ENCODE measurements at regions of chr3 and their contacts with region 1.

Region 1: GRCh38 chr3:141963301-141963700 is 86.9 kb downstream of the ATP1B3 start:
- DNase-seq: no peak
- ATAC-seq: no peak
- H3K4me3 Mint-ChIP-seq: no peak overlapping the region
- H3K27ac Mint-ChIP-seq: no peak overlapping the region
- H3K4me1 Mint-ChIP-seq: peaks cover 2% of the 10 kb centered on the region
- H3K27me3 Mint-ChIP-seq: no peaks in the 10 kb centered on the region

Region 2: GRCh38 chr3:141816958-141817357 is 146.3 kb before region 1 on chr3:
- CTCF ChIA-PET with region 1: no interaction called
- POLR2A ChIA-PET with region 1: no interaction called
- DNase-seq: no peak
- ATAC-seq: no peak
- H3K4me3 Mint-ChIP-seq: no peak overlapping the region
- H3K27ac Mint-ChIP-seq: no peak overlapping the region
- H3K4me1 Mint-ChIP-seq: no peaks in the 10 kb centered on the region
- H3K27me3 Mint-ChIP-seq: peaks cover 26% of the 10 kb centered on the region

Region 3: DNA sequence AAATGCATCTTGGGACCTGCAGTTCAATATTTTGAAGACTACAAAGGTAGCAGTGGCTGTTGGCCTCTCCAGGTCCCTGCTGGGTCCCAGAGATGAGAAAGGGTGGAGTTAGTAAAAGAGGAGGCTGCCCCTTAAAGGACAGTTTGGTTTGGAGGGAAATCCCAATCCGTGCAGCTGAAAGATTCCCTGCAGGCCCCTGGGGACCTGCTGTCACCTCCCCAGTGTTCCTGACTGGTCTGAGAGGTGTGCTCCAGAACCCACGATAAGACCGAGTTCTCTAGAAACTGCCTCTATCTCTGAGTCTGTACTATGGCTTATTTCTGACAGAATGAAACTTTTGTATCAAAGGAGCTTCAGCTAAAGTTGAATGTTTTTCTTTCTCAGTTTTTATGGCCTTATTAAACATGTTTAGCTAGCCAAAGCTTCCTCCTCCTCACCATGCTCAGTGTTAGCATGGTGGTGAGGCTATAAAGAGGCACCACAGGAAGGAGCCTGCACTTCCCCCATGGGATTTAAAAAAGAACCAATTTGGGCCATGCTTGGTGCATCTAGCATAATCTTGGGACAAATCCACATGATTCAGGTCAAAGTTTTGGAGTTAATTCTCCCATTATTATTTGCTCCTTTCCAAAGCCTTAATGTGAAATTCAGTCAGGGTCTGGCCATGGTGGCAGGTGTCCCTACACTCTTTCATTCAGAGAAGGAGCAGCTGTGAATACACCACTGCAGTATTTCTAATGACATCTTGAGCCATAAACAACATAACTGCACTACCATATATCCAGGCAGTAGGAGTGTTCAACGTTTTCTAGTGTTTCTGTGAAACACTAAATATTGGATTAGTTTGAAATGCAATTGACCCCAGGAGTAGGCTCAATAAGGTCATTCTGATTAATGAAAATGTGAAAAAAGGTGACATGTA is 12.5 kb before region 1 on chr3:
- CTCF ChIA-PET with region 1: interaction called, 12 read pairs
- POLR2A ChIA-PET with region 1: no interaction called
- DNase-seq: no peak
- ATAC-seq: no peak
- H3K4me3 Mint-ChIP-seq: no peak overlapping the region
- H3K27ac Mint-ChIP-seq: no peak overlapping the region
- H3K4me1 Mint-ChIP-seq: peaks cover 5% of the 10 kb centered on the region
- H3K27me3 Mint-ChIP-seq: no peaks in the 10 kb centered on the region

Measured in activated CD8-positive, alpha-beta T cell treated with anti-CD3 and anti-CD28 coated beads, Interleukin-2, amount 10 ng/mL, durations not matched to agents 7 days and 5 days (primary cell).